ENCODE measurements at regions of chr13 and their contacts with region 1.

Region 1: DNA sequence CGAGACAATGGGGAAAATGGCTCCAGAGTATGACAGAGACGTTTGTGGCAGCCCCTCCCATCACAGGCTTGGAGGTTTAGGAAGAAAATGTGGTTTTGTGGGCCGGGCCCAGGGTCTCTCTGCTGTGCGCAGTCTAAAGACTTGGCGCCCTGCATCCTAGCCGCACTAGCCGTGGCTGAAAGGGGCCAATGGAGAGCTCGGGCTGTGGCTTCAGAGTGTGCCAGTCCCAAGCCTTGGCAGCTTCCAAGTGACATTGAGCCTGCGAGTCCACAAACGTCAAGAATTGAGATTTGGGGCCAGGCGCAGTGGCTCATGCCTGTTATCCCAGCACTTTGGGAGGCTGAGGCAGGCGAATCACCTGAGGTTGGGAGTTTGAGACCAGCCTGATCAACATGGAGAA is 513.1 kb downstream of the PCDH17 start:
- DNase-seq: no peak
- H3K4me3 ChIP-seq: no peak overlapping the region
- H3K27ac ChIP-seq: no peak overlapping the region
- H3K4me1 ChIP-seq: no peaks in the 10 kb centered on the region
- H3K27me3 ChIP-seq: no peaks in the 10 kb centered on the region
- CTCF ChIP-seq: no peak
- POLR2A ChIP-seq: no peak

Region 2: DNA sequence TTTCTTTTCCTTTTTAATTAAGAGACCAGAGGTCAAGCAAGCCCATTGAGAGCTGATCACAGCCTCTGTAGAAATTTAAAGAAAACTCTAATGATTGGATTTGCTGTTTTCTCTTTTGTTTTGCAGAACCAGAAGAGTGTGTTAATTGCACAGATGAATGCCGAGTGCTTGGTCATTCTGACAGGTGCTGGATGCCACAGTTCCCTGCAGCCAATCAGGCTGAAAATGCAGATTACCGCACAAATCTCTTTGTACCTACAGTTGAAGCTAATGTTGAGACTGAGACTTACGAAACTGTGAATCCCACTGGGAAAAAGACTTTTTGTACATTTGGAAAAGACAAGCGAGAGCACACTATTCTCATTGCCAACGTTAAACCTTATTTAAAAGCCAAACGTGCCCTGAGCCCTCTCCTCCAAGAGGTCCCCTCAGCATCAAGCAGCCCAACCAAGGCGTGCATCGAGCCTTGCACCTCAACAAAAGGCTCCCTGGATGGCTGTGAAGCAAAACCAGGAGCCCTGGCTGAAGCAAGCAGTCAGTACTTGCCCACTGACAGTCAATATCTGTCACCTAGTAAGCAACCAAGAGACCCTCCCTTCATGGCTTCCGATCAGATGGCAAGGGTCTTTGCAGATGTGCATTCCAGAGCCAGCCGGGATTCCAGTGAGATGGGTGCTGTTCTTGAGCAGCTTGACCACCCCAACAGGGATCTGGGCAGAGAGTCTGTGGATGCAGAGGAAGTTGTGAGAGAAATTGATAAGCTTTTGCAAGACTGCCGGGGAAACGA is 419.9 kb before region 1 on chr13:
- intact Hi-C with region 1: loop called (anchors 5 kb)
- DNase-seq: no peak
- H3K4me3 ChIP-seq: no peak overlapping the region
- H3K27ac ChIP-seq: no peak overlapping the region
- H3K4me1 ChIP-seq: no peaks in the 10 kb centered on the region
- H3K27me3 ChIP-seq: no peaks in the 10 kb centered on the region
- CTCF ChIP-seq: no peak
- POLR2A ChIP-seq: no peak

Region 3: GRCh38 chr13:58119351-58119750 is 25.3 kb before region 1 on chr13:
- intact Hi-C with region 1: no loop called
- DNase-seq: no peak
- H3K4me3 ChIP-seq: no peak overlapping the region
- H3K27ac ChIP-seq: no peak overlapping the region
- H3K4me1 ChIP-seq: no peaks in the 10 kb centered on the region
- H3K27me3 ChIP-seq: no peaks in the 10 kb centered on the region
- CTCF ChIP-seq: no peak
- POLR2A ChIP-seq: no peak

Measured in breast epithelium (tissue), 4 donors.